ENCODE measurements at regions of chr13 and their contacts with region 1.

Region 1: GRCh38 chr13:105349082-105349723 is 1186.3 kb downstream of the EFNB2 start:
- DNase-seq: no peak
- CTCF ChIP-seq: no peak

Region 2: GRCh38 chr13:105232439-105232838 is 116.8 kb before region 1 on chr13:
- CTCF ChIA-PET with region 1: no interaction called
- POLR2A ChIA-PET with region 1: no interaction called
- DNase-seq: no peak
- CTCF ChIP-seq: no peak

Region 3: DNA sequence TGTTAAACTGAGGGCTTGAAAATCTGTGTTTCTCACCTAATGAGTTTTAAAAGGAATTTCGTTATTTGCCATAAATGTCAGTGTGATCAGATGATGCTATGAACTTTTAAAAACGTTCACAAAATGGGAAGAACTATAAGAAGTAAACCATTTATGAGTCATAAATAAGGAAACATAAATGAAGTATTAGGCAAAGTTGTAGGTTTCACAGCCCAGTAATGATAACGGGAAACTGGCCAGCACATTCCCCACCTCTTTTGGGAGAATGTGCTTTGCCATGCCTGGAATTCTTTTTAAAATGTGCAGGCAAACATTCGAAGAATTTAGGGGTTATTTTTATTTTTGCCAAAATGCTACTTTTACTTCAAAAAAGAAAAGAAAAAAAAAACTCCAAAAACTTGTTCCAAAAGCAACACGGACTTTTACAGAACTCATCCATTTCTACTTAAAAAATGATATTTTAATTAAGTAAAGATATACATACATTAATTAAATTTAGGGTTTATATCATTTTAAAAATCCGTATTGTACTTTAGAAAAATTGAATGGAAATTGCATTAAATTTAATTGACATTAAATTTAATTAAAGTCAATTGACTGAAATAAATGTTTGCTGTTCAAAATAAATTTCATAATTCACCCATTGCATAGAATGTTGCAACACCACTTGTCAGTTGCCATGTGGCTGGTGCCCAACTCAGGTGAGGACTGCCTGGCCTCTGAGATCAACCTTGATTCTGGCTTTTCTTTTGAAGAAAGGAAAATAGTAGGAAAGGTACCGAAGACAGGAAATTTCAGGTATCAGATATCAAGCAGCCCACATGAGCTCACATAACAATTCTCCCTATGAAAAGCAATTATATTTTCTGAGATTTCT is 12.3 kb before region 1 on chr13:
- CTCF ChIA-PET with region 1: interaction called, 21 read pairs
- POLR2A ChIA-PET with region 1: no interaction called
- DNase-seq: no peak
- CTCF ChIP-seq: no peak